ENCODE measurements at regions of chr6 and their contacts with region 1.

Region 1: DNA sequence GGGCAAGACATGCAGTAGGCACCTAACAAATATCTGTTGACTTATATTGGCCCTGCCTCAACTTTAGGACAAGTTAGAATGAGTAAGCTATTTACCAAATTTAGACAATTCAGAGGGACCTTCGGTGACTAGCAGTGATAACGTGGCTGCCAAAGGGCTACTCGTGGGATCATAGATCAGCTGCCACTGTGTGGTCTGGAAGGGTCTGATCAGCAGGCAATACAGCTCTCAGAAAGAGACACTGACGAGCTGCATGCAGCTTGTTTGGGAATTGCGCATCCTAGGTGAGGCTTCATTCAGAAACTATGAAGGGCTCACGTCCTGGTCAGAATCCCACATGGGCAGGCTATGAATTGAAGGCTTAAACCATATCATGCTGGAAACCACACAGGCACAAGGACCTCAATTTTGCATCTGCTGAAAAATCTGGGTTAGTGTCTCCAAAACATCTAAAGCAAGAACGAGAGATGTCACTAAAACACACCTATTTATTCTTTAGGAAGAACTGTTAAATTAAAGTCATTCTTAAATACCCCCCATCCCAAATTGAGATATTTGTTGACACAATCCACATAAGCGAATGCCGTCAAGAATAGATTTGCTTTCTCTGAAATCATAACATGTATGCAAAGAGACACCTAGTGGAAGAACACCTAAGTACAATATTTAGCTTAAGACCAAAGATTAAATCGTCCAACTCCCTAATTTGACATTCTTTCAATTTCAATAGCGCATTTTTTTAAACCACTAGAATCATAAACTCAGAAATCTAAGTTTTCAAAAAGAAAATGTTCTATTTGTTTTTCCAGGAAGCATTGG is 79.6 kb downstream of the IPCEF1 start:
- DNase-seq: no peak
- ATAC-seq: peak; percentile 88
- H3K4me3 ChIP-seq: no peak overlapping the region
- H3K27ac ChIP-seq: no peak overlapping the region
- H3K4me1 ChIP-seq: peaks cover 7% of the 10 kb centered on the region
- H3K27me3 ChIP-seq: no peaks in the 10 kb centered on the region
- CTCF ChIP-seq: peak; percentile 58 to 77 (median 58); a peak in 5 of 6 replicates
- EP300 ChIP-seq: no peak
- POLR2A ChIP-seq: no peak
- RAD21 ChIP-seq: peak; percentile 79

Region 2: GRCh38 chr6:153668758-153669157 is 608.3 kb before region 1 on chr6:
- CTCF ChIA-PET with region 1: no interaction called
- POLR2A ChIA-PET with region 1: no interaction called
- RAD21 ChIA-PET with region 1: no interaction called
- SMC1A ChIA-PET with region 1: no interaction called
- in situ Hi-C with region 1: no loop called
- intact Hi-C with region 1: no loop called
- DNase-seq: no peak
- ATAC-seq: no peak
- H3K4me3 ChIP-seq: no peak overlapping the region
- H3K27ac ChIP-seq: no peak overlapping the region
- H3K4me1 ChIP-seq: no peaks in the 10 kb centered on the region
- H3K27me3 ChIP-seq: no peaks in the 10 kb centered on the region
- CTCF ChIP-seq: no peak
- EP300 ChIP-seq: no peak
- POLR2A ChIP-seq: no peak
- RAD21 ChIP-seq: no peak

Region 3: GRCh38 chr6:154139892-154140291 is 137.1 kb before region 1 on chr6:
- CTCF ChIA-PET with region 1: interaction called, 15 read pairs
- POLR2A ChIA-PET with region 1: no interaction called
- RAD21 ChIA-PET with region 1: interaction called, 3 read pairs
- SMC1A ChIA-PET with region 1: interaction called, 19 read pairs
- in situ Hi-C with region 1: no loop called
- intact Hi-C with region 1: no loop called
- DNase-seq: no peak
- ATAC-seq: no peak
- H3K4me3 ChIP-seq: no peak overlapping the region
- H3K27ac ChIP-seq: no peak overlapping the region
- H3K4me1 ChIP-seq: no peaks in the 10 kb centered on the region
- H3K27me3 ChIP-seq: peaks cover 0 to 3% of the 10 kb centered on the region in 2 experiments; a peak in 2 of 4 replicates
- CTCF ChIP-seq: no peak
- EP300 ChIP-seq: no peak
- POLR2A ChIP-seq: no peak
- RAD21 ChIP-seq: no peak

Region 4: GRCh38 chr6:154219250-154219649 is 57.8 kb before region 1 on chr6:
- CTCF ChIA-PET with region 1: interaction called, 25 read pairs
- POLR2A ChIA-PET with region 1: interaction called, 5 read pairs
- RAD21 ChIA-PET with region 1: no interaction called
- SMC1A ChIA-PET with region 1: interaction called, 10 read pairs
- in situ Hi-C with region 1: no loop called
- intact Hi-C with region 1: no loop called
- DNase-seq: no peak
- ATAC-seq: no peak
- H3K4me3 ChIP-seq: no peak overlapping the region
- H3K27ac ChIP-seq: no peak overlapping the region
- H3K4me1 ChIP-seq: no peaks in the 10 kb centered on the region
- H3K27me3 ChIP-seq: no peaks in the 10 kb centered on the region; a peak in 1 of 4 replicates
- CTCF ChIP-seq: no peak
- EP300 ChIP-seq: no peak
- POLR2A ChIP-seq: no peak
- RAD21 ChIP-seq: no peak

Region 5: DNA sequence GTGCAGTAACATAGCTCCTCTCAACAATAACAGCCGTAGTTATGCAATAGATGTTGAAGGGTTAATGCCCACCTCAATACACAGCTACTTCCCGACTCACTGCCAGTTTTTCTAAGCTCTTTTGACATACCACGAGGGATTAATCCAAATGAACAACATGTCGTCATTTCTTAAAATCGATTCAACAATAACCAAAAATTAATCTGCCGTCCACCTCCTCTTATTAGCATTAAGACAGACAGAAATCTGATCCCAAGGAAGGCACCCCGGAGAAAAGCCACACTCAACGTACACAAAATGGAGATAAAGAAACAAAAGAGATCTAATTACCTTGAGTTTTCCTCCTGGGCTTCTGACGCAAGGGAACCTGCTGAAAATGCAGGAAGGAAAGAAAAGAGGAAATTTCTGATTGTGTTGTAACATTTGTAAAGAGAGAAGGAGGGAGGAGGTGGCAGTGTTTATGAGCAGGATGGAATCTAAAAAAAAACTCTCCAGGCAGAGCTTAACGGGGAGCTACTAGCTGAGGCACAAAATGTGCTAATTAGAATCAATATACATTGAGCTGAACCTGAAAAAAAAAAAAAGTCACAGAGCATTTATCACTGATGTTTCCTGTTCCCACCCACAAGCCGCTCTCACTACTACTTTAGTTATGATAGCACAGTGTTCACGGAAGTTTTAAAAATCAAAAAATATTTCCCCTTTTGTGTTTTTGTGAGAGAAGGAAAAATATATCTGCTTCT is 29.7 kb before region 1 on chr6:
- CTCF ChIA-PET with region 1: interaction called, 90 read pairs
- POLR2A ChIA-PET with region 1: interaction called, 7 read pairs
- RAD21 ChIA-PET with region 1: interaction called, 70 read pairs
- SMC1A ChIA-PET with region 1: interaction called, 116 read pairs
- in situ Hi-C with region 1: no loop called
- intact Hi-C with region 1: loop called (anchors 2 kb)
- DNase-seq: no peak
- ATAC-seq: peak; percentile 59
- H3K4me3 ChIP-seq: peak overlapping the region; percentile 76
- H3K27ac ChIP-seq: peak overlapping the region; percentile 86
- H3K4me1 ChIP-seq: peaks cover 26% of the 10 kb centered on the region
- H3K27me3 ChIP-seq: no peaks in the 10 kb centered on the region
- CTCF ChIP-seq: no peak
- EP300 ChIP-seq: peak; percentile 60 to 73
- POLR2A ChIP-seq: no peak
- RAD21 ChIP-seq: no peak

Region 6: DNA sequence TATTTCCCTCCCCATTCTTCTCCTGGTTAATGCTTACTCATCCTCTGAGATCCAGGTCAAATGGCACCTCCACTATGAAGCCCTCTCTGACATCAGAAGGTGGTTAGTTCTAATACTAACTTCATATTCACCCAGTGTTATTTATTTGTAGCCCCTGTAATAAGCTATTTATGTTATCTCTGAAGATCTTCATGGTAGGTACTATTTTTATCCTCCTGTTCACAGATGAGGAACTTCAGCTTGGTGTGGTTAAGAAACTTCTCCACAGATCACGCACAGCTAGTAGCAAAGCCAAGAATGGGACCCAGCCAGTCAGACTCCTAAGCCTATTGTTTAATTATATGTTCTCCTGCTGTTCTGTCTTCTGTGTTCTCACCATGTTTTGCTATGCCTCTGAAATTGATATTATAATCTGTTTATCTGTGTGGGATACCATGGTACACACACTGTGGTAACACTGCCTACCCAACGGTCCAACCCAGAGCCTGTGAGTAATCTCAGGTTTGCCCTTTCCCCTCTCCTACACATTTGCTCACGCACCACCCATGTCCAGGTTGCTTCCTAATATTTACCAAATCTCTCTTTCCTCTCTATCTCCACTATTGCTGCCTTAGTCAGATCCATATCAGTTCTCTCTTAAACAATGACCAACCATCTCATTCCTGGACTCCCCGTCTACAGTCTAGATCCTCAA is 18.8 kb before region 1 on chr6:
- CTCF ChIA-PET with region 1: interaction called, 19 read pairs
- POLR2A ChIA-PET with region 1: interaction called, 3 read pairs
- RAD21 ChIA-PET with region 1: interaction called, 13 read pairs
- SMC1A ChIA-PET with region 1: interaction called, 55 read pairs
- in situ Hi-C with region 1: no loop called
- intact Hi-C with region 1: no loop called
- DNase-seq: no peak
- ATAC-seq: peak; percentile 77
- H3K4me3 ChIP-seq: no peak overlapping the region
- H3K27ac ChIP-seq: peak overlapping the region; percentile 61
- H3K4me1 ChIP-seq: peaks cover 41% of the 10 kb centered on the region
- H3K27me3 ChIP-seq: no peaks in the 10 kb centered on the region
- CTCF ChIP-seq: no peak
- EP300 ChIP-seq: peak in 1 of 2 experiments; percentile 79; a peak in 3 of 4 replicates
- POLR2A ChIP-seq: no peak
- RAD21 ChIP-seq: no peak

Region 7: GRCh38 chr6:154474636-154475428 is 197.8 kb after region 1 on chr6:
- CTCF ChIA-PET with region 1: no interaction called
- POLR2A ChIA-PET with region 1: no interaction called
- RAD21 ChIA-PET with region 1: no interaction called
- SMC1A ChIA-PET with region 1: no interaction called
- in situ Hi-C with region 1: no loop called
- intact Hi-C with region 1: no loop called
- DNase-seq: no peak
- ATAC-seq: no peak
- H3K4me3 ChIP-seq: no peak overlapping the region
- H3K27ac ChIP-seq: no peak overlapping the region
- H3K4me1 ChIP-seq: no peaks in the 10 kb centered on the region
- H3K27me3 ChIP-seq: no peaks in the 10 kb centered on the region; a peak in 1 of 4 replicates
- CTCF ChIP-seq: no peak
- EP300 ChIP-seq: no peak
- POLR2A ChIP-seq: no peak
- RAD21 ChIP-seq: no peak

Region 8: DNA sequence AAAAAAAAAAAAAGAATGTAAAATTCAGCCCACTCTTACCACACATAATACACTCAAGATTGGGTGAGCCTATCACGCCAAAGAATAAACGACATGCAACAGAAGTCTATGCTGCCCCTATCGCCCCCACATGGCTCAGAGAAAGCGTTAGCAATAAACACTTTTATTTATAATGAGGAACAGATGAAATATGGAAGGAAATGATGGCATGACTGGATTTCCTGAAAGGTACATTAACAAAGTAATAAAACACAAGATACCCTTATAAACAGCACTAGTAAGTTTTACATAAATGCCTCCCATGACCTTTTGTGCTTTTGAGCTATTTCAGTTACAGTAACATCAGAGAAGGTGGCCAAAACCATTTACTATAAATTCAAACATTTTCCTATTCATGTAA is 384.7 kb after region 1 on chr6:
- CTCF ChIA-PET with region 1: no interaction called
- POLR2A ChIA-PET with region 1: no interaction called
- RAD21 ChIA-PET with region 1: no interaction called
- SMC1A ChIA-PET with region 1: no interaction called
- in situ Hi-C with region 1: no loop called
- intact Hi-C with region 1: loop called (anchors 10 kb)
- DNase-seq: no peak
- ATAC-seq: no peak
- H3K4me3 ChIP-seq: no peak overlapping the region
- H3K27ac ChIP-seq: no peak overlapping the region
- H3K4me1 ChIP-seq: no peaks in the 10 kb centered on the region
- H3K27me3 ChIP-seq: peaks cover 0 to 4% of the 10 kb centered on the region in 2 experiments; a peak in 1 of 4 replicates
- CTCF ChIP-seq: no peak
- EP300 ChIP-seq: no peak
- POLR2A ChIP-seq: no peak
- RAD21 ChIP-seq: no peak

Region 9: GRCh38 chr6:154773610-154774089 is 496.6 kb after region 1 on chr6:
- CTCF ChIA-PET with region 1: no interaction called
- POLR2A ChIA-PET with region 1: no interaction called
- RAD21 ChIA-PET with region 1: no interaction called
- SMC1A ChIA-PET with region 1: no interaction called
- in situ Hi-C with region 1: no loop called
- intact Hi-C with region 1: no loop called
- DNase-seq: peak; percentile 69
- ATAC-seq: peak; percentile 93
- H3K4me3 ChIP-seq: peak overlapping the region; percentile 34
- H3K27ac ChIP-seq: peak overlapping the region; percentile 84
- H3K4me1 ChIP-seq: peaks cover 15% of the 10 kb centered on the region; the same call in 1 of the 2 replicates
- H3K27me3 ChIP-seq: no peaks in the 10 kb centered on the region
- CTCF ChIP-seq: no peak
- EP300 ChIP-seq: peak; percentile 66 to 76
- POLR2A ChIP-seq: no peak
- RAD21 ChIP-seq: no peak

Region 10: GRCh38 chr6:155030148-155030720 is 753.2 kb after region 1 on chr6:
- CTCF ChIA-PET with region 1: no interaction called
- POLR2A ChIA-PET with region 1: no interaction called
- RAD21 ChIA-PET with region 1: no interaction called
- SMC1A ChIA-PET with region 1: no interaction called
- in situ Hi-C with region 1: no loop called
- intact Hi-C with region 1: no loop called
- DNase-seq: no peak
- ATAC-seq: no peak
- H3K4me3 ChIP-seq: no peak overlapping the region
- H3K27ac ChIP-seq: no peak overlapping the region
- H3K4me1 ChIP-seq: no peaks in the 10 kb centered on the region
- H3K27me3 ChIP-seq: 0 out of 4 replicates have a peak, but pooled peaks cover 0 to 1% of the 10 kb centered on the region in 2 experiments
- CTCF ChIP-seq: no peak
- EP300 ChIP-seq: no peak
- POLR2A ChIP-seq: no peak
- RAD21 ChIP-seq: no peak